Calu3 (cell line): ENCODE measurements at regions of chr19 and their contacts with region 1.

Region 1: GRCh38 chr19:28960986-28961705 is 251.8 kb downstream of the UQCRFS1 start:
- DNase-seq: peak; percentile 70
- H3K4me3 Mint-ChIP-seq: peak overlapping the region; percentile 55
- H3K27ac Mint-ChIP-seq: peak overlapping the region; percentile 99
- H3K4me1 Mint-ChIP-seq: peaks cover 38% of the 10 kb centered on the region
- H3K27me3 Mint-ChIP-seq: no peaks in the 10 kb centered on the region
- CTCF ChIP-seq: no peak

Region 2: GRCh38 chr19:28999724-29000433 is 38.7 kb after region 1 on chr19:
- CTCF ChIA-PET with region 1: no interaction called
- intact Hi-C with region 1: loop called (anchors 5 kb)
- DNase-seq: no peak
- H3K4me3 Mint-ChIP-seq: no peak overlapping the region
- H3K27ac Mint-ChIP-seq: no peak overlapping the region
- H3K4me1 Mint-ChIP-seq: peaks cover 22% of the 10 kb centered on the region
- H3K27me3 Mint-ChIP-seq: no peaks in the 10 kb centered on the region
- CTCF ChIP-seq: no peak